GM10248 (cell line): ENCODE measurements at regions of chr5 and their contacts with region 1.

Region 1: GRCh38 chr5:132466433-132467286 is 23.9 kb downstream of the IRF1 start:
- DNase-seq: peak; percentile 73
- CTCF ChIP-seq: no peak

Region 2: DNA sequence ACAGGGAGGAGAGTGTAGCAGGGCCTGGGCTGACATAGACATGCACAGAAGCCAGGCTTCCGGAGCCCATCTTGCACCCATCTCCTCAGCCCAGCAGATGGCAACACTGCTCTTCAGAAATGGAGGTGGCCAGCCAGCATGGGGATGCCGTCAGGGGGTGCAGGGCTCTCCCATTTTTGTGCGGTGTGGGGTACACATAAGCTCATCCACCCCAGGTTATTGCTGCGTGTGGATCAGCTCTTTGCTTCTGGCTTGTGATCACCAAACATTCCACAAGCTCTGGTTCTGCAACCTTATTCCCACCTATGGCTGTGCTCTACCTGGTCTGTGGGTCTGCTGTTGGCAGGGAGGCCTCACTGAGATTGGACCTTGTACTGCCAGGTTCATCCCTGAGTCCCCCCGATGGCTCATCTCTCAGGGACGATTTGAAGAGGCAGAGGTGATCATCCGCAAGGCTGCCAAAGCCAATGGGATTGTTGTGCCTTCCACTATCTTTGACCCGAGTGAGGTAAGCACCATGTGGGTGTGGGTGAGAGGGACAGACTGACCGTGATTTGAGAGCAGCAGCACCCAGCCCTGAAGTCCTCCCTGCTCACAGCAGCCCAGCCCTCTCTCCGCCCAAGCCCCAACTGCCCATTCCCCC is 79.9 kb before region 1 on chr5:
- CTCF ChIA-PET with region 1: interaction called, 18 read pairs
- POLR2A ChIA-PET with region 1: no interaction called
- DNase-seq: peak; percentile 87
- CTCF ChIP-seq: peak; percentile 89

Region 3: GRCh38 chr5:132437604-132438266 is 28.9 kb before region 1 on chr5:
- CTCF ChIA-PET with region 1: interaction called, 23 read pairs
- POLR2A ChIA-PET with region 1: no interaction called
- DNase-seq: peak; percentile 82
- CTCF ChIP-seq: no peak